ENCODE measurements at regions of chr5 and their contacts with region 1.

Region 1: GRCh38 chr5:43120720-43121564 is at the start of gene ZNF131:
- DNase-seq: peak; percentile 89
- ATAC-seq: peak; percentile 95
- H3K4me3 ChIP-seq: peak within 1 kb of the TSS; percentile 88 to 97 (median 92)
- H3K27ac ChIP-seq: peak within 1 kb of the TSS; percentile 98
- H3K4me1 ChIP-seq: peaks cover 45% of the 10 kb centered on the region
- H3K27me3 ChIP-seq: no peaks in the 10 kb centered on the region; a peak in 1 of 5 replicates
- CTCF ChIP-seq: no peak
- EP300 ChIP-seq: no peak
- POLR2A ChIP-seq: peak; percentile 76 to 94
- RAD21 ChIP-seq: no peak
- total RNA-seq, gene ZNF131: 30.4 and 33.3 TPM in 2 replicates

Region 2: GRCh38 chr5:42636425-42636824 is 484.5 kb before region 1 on chr5:
- CTCF ChIA-PET with region 1: no interaction called
- POLR2A ChIA-PET with region 1: no interaction called
- in situ Hi-C with region 1: no loop called
- intact Hi-C with region 1: no loop called
- DNase-seq: peak; percentile 29
- ATAC-seq: peak; percentile 71
- H3K4me3 ChIP-seq: no peak overlapping the region
- H3K27ac ChIP-seq: no peak overlapping the region
- H3K4me1 ChIP-seq: no peaks in the 10 kb centered on the region
- H3K27me3 ChIP-seq: no peaks in the 10 kb centered on the region
- CTCF ChIP-seq: peak; percentile 35
- EP300 ChIP-seq: no peak
- POLR2A ChIP-seq: no peak
- RAD21 ChIP-seq: no peak

Region 3: GRCh38 chr5:42811591-42812446 is 309.1 kb before region 1 on chr5 and contains the start of gene SELENOP:
- CTCF ChIA-PET with region 1: no interaction called
- POLR2A ChIA-PET with region 1: interaction called, 6 read pairs
- in situ Hi-C with region 1: no loop called
- intact Hi-C with region 1: loop called (anchors 10 kb)
- DNase-seq: peak; percentile 99
- ATAC-seq: peak; percentile 84
- H3K4me3 ChIP-seq: peak within 1 kb of the TSS; percentile 72 to 100 (median 84)
- H3K27ac ChIP-seq: peak within 1 kb of the TSS; percentile 96
- H3K4me1 ChIP-seq: peaks cover 52% of the 10 kb centered on the region
- H3K27me3 ChIP-seq: peaks cover 0 to 5% of the 10 kb centered on the region in 2 experiments; a peak in 1 of 5 replicates
- CTCF ChIP-seq: no peak
- EP300 ChIP-seq: peak; percentile 84 to 96
- POLR2A ChIP-seq: peak; percentile 98 to 100
- RAD21 ChIP-seq: no peak
- total RNA-seq, gene SELENOP: 1,596 and 1,895 TPM in 2 replicates

Region 4: GRCh38 chr5:43008369-43009153 is 112.4 kb before region 1 on chr5:
- CTCF ChIA-PET with region 1: no interaction called
- POLR2A ChIA-PET with region 1: interaction called, 26 read pairs
- in situ Hi-C with region 1: no loop called
- intact Hi-C with region 1: loop called (anchors 1 kb)
- DNase-seq: peak; percentile 89
- ATAC-seq: peak; percentile 71
- H3K4me3 ChIP-seq: peak overlapping the region; percentile 73 to 94 (median 78)
- H3K27ac ChIP-seq: peak overlapping the region; percentile 84
- H3K4me1 ChIP-seq: peaks cover 12% of the 10 kb centered on the region
- H3K27me3 ChIP-seq: no peaks in the 10 kb centered on the region; a peak in 1 of 5 replicates
- CTCF ChIP-seq: peak; percentile 76
- EP300 ChIP-seq: peak in 1 of 2 experiments; percentile 53; a peak in 1 of 4 replicates
- POLR2A ChIP-seq: peak; percentile 45 to 60; a peak in 3 of 4 replicates
- RAD21 ChIP-seq: peak; percentile 14; the same call in 1 of the 2 replicates

Region 5: DNA sequence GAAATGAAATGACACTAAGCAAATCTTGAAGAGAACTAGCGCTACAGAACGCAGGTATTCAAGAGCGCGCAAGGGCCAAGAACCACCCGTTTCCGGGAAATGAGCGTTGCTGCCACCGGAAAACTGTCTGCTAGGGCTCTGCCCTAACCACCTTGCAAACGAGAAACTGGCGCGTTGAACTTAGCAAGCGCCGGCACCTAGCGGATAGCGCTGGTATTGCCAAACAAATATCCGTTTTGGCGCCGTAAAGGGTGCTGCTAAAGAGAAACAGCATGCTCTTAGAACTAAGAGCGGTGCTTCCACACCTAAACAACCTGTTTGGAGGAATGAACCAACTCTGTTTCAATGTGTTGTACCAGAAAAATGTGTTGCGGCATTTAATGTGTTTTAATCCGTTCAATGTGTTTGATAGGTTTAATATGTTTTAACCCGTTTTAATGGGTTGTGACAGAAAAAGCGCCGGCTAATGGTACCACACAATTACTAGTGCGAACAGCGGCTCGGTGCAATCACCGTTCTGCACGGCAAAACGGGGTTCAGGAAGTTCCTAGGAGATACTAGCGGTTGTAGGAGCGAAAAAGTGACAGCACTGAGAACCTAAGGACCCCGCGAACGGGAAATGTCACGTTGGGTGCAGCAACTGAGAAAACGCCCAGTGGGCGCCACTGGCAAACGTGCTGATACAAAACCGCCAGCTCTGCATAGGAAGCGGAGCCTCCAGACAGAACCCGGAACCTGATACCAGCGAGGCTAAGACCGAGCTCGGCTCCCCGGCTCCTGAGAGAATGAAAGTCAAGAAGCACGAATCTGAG is 80.4 kb before region 1 on chr5 and contains the start of gene ANXA2R:
- CTCF ChIA-PET with region 1: no interaction called
- POLR2A ChIA-PET with region 1: interaction called, 16 read pairs
- in situ Hi-C with region 1: no loop called
- intact Hi-C with region 1: no loop called
- DNase-seq: peak; percentile 81
- ATAC-seq: peak; percentile 55
- H3K4me3 ChIP-seq: peak within 1 kb of the TSS; percentile 77 to 82 (median 81)
- H3K27ac ChIP-seq: peak within 1 kb of the TSS; percentile 82
- H3K4me1 ChIP-seq: peaks cover 17% of the 10 kb centered on the region
- H3K27me3 ChIP-seq: no peaks in the 10 kb centered on the region; a peak in 1 of 5 replicates
- CTCF ChIP-seq: peak; percentile 85
- EP300 ChIP-seq: no peak
- POLR2A ChIP-seq: no peak; a peak in 1 of 4 replicates
- RAD21 ChIP-seq: no peak
- total RNA-seq, gene ANXA2R: 0.76 and 0.95 TPM in 2 replicates

Region 6: DNA sequence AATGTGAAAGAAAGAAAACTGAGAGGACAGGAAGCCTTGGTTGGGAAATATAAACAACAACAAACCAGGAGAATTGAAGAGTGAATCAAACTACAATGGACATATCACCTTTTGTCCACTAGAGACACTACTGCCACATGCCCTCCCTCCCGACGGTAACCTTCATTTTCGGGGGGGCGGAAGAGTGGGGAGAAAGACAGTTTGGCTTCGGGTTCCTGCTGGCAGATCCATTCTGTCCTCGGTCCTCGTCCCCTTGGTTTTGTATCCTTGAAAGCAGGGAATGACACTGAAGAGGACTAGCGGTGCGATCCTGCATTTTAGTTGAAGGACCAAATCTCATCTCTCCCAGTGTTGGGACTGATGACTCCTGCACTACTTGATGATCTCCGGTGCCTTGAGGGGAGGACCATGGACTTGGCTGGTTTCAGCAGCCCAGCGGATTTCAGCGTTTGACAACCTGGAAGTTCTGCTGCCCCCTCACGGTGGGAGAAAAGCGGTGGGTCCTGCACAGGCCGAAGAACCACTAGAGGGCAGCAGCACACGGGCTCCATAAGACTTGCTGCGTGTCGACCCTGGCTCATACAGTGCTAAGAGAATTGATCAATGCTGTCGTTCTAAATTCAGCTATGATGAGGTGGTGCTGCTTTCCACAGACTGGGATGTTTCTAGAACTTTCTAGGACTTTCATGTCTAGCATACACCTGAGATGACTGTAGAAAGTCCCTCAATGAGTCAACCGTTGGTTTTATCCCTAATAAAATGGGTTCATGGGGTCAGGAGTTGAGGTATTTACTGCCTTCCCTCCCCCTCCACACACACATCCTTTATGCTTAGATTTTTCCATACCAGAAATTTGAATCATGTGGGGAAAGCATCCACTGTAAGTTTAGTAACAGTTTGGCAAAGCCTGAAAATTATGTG is 15.3 kb before region 1 on chr5:
- CTCF ChIA-PET with region 1: interaction called, 7 read pairs
- POLR2A ChIA-PET with region 1: interaction called, 19 read pairs
- in situ Hi-C with region 1: no loop called
- intact Hi-C with region 1: no loop called
- DNase-seq: peak; percentile 90
- ATAC-seq: peak; percentile 97
- H3K4me3 ChIP-seq: peak overlapping the region; percentile 45 to 66 (median 45)
- H3K27ac ChIP-seq: peak overlapping the region; percentile 15
- H3K4me1 ChIP-seq: peaks cover 15% of the 10 kb centered on the region
- H3K27me3 ChIP-seq: no peaks in the 10 kb centered on the region
- CTCF ChIP-seq: peak; percentile 99
- EP300 ChIP-seq: no peak
- POLR2A ChIP-seq: no peak
- RAD21 ChIP-seq: peak; percentile 93

Region 7: DNA sequence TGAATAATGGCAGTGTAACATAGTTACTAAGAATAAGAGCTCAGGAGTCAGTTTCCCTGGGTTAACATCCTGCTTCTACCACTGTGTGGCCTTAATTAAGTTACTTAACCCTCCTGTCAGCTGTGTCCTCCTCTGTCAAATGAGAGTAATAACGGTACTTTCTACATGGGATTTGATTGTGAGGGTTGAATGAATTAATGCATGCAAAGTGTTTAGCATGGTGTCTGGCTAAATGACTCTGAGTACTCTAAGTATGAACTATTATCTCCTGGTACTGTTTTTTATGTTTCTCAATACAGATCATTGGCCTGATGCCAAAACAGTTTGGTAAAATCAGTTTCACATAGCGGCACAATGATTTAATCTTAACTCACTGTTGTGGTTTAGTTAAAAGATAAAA is 19.3 kb after region 1 on chr5:
- CTCF ChIA-PET with region 1: no interaction called
- POLR2A ChIA-PET with region 1: interaction called, 14 read pairs
- in situ Hi-C with region 1: no loop called
- intact Hi-C with region 1: no loop called
- DNase-seq: no peak
- ATAC-seq: no peak
- H3K4me3 ChIP-seq: no peak overlapping the region
- H3K27ac ChIP-seq: no peak overlapping the region
- H3K4me1 ChIP-seq: peaks cover 11% of the 10 kb centered on the region; the same call in 1 of the 2 replicates
- H3K27me3 ChIP-seq: no peaks in the 10 kb centered on the region
- CTCF ChIP-seq: no peak
- EP300 ChIP-seq: no peak
- POLR2A ChIP-seq: no peak
- RAD21 ChIP-seq: no peak

Region 8: DNA sequence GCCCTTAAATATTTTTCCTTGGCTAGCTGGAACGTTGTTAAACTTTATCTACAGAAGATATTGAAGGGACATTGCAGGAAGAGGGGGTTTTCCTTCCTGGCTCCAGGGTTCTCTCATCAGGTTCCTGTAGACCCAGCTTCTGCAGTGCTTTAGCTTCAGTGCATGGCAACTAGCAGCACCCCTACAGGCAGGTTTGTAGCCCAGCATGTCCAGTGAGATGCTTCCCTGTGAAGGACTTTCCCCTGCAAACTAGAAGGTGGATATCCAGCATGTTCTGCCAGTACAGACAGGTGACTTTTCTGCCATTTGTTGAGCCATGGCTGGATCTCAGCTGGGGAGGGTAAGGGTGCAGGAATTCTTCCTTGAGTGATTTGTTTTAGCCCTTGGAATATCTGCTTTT is 280.9 kb after region 1 on chr5:
- CTCF ChIA-PET with region 1: no interaction called
- POLR2A ChIA-PET with region 1: interaction called, 10 read pairs
- in situ Hi-C with region 1: no loop called
- intact Hi-C with region 1: no loop called
- DNase-seq: peak; percentile 72
- ATAC-seq: peak; percentile 100
- H3K4me3 ChIP-seq: peak overlapping the region; percentile 53 to 78 (median 59)
- H3K27ac ChIP-seq: peak overlapping the region; percentile 71
- H3K4me1 ChIP-seq: peaks cover 10% of the 10 kb centered on the region
- H3K27me3 ChIP-seq: no peaks in the 10 kb centered on the region
- CTCF ChIP-seq: peak; percentile 63
- EP300 ChIP-seq: no peak
- POLR2A ChIP-seq: 0 out of 4 replicates have a peak, but pooled peaks of 1 of the 2 experiments have one; percentile 13
- RAD21 ChIP-seq: peak; percentile 52

Measured in HepG2 (cell line).